ENCODE measurements at regions of chr13 and their contacts with region 1.

Region 1: GRCh38 chr13:26929971-26930730 is 169.6 kb upstream of the GPR12 start:
- DNase-seq: peak; percentile 73
- H3K27ac ChIP-seq: no peak overlapping the region
- CTCF ChIP-seq: peak; percentile 90

Region 2: DNA sequence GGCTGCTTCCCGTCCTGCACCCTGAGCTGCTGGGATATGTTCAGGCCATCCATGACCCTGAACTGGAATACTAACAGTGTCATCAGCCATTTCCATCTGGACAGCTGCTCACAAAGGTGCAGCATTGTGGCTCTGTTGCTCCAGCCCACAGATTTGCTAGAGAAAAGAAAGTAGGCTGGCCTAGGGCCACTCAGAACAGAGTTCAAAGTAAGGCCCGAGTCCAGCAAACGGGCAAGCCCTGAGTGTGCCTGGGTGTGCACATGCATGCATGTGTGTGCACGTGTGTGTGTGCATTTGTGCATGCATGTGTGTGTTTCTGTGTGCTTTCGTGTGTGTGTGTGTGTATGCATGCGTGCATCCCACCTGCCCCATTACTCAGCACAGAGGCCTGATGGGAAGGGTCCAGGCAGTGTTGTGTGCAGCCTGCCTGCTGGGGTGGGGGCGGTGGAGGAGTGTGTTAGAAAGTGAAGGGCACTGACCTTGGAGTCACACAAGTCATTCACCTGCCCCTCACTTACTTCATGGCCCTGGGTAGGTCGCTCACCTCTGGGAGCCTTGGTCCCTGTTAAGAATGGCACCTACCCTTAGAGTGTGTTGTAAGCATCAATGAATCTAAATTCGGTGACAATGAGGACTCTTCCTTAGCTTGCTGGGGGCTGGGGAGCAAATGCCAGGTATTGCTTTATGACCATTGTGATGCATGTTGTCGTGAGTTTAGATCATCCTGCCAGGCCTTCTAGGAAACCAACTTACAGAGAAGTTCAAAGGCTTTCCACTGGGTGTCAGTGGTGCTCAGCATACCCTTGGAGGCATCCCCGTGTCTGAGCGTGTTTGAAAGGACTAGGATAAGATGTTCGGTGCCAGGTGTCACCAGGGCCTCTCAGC is 222.8 kb before region 1 on chr13:
- CTCF ChIA-PET with region 1: interaction called, 13 read pairs
- POLR2A ChIA-PET with region 1: no interaction called
- DNase-seq: peak; percentile 49
- H3K27ac ChIP-seq: no peak overlapping the region
- CTCF ChIP-seq: peak; percentile 32; the same call in 1 of the 2 replicates

Region 3: DNA sequence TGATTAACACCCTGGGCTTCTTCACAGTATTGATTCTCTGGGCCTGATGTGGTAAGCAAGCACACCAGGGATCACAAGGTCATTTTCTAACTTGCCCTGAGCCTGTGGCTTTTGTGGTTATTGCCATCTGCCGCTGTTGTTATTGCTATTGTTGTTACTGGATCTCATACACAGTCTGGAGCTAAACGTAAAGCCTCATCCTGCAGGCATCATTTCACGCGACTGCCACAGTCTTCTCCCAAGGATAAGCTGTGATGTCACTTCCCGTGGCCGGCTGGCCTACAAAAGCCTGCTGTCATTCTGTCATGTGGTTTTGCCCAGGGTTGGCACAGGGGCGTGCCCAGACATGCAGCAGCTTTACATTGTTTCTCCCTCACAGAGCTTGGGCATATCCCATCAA is 15.5 kb before region 1 on chr13:
- CTCF ChIA-PET with region 1: interaction called, 11 read pairs
- POLR2A ChIA-PET with region 1: no interaction called
- DNase-seq: peak; percentile 38
- H3K27ac ChIP-seq: no peak overlapping the region
- CTCF ChIP-seq: no peak